ENCODE measurements at regions of chr2 and their contacts with region 1.

Region 1: GRCh38 chr2:181715033-181715630 is 34.8 kb upstream of the NEUROD1 start:
- DNase-seq: peak; percentile 89
- H3K4me3 Mint-ChIP-seq: no peak overlapping the region
- H3K27ac Mint-ChIP-seq: no peak overlapping the region
- H3K4me1 Mint-ChIP-seq: no peaks in the 10 kb centered on the region
- H3K27me3 Mint-ChIP-seq: no peaks in the 10 kb centered on the region

Region 2: GRCh38 chr2:181077128-181077709 is 637.9 kb before region 1 on chr2:
- CTCF ChIA-PET with region 1: interaction called, 11 read pairs
- intact Hi-C with region 1: loop called (anchors 1 kb)
- DNase-seq: peak; percentile 8
- H3K4me3 Mint-ChIP-seq: no peak overlapping the region
- H3K27ac Mint-ChIP-seq: no peak overlapping the region
- H3K4me1 Mint-ChIP-seq: peaks cover 6% of the 10 kb centered on the region
- H3K27me3 Mint-ChIP-seq: no peaks in the 10 kb centered on the region

Region 3: DNA sequence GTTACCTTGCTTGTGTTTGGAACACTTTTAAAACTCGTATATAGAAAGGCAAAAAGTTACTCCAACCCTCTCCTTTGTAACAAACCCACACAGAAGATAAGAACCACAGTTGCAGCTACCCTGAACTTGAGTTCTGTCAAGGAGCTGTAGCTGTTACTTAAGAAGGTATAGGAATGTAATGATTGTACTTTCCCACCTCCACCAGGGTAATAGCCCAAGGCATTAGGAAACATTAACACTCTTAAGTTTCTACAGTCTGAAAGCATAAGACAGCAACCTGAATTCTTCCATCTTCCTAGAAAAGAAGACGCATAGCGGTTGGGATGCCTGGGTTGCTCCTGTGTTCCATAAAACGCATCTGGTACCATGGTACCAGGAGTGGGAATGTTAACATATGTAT is 214.9 kb before region 1 on chr2:
- CTCF ChIA-PET with region 1: interaction called, 11 read pairs
- intact Hi-C with region 1: no loop called
- DNase-seq: no peak
- H3K4me3 Mint-ChIP-seq: no peak overlapping the region
- H3K27ac Mint-ChIP-seq: no peak overlapping the region
- H3K4me1 Mint-ChIP-seq: no peaks in the 10 kb centered on the region
- H3K27me3 Mint-ChIP-seq: no peaks in the 10 kb centered on the region

Region 4: GRCh38 chr2:181586569-181587081 is 128.5 kb before region 1 on chr2:
- CTCF ChIA-PET with region 1: interaction called, 18 read pairs
- intact Hi-C with region 1: no loop called
- DNase-seq: peak; percentile 20
- H3K4me3 Mint-ChIP-seq: no peak overlapping the region
- H3K27ac Mint-ChIP-seq: no peak overlapping the region
- H3K4me1 Mint-ChIP-seq: peaks cover 9% of the 10 kb centered on the region
- H3K27me3 Mint-ChIP-seq: peaks cover 2% of the 10 kb centered on the region

Region 5: GRCh38 chr2:181683518-181684453 is 31.3 kb before region 1 on chr2:
- CTCF ChIA-PET with region 1: interaction called, 13 read pairs
- intact Hi-C with region 1: no loop called
- DNase-seq: peak; percentile 27
- H3K4me3 Mint-ChIP-seq: peak overlapping the region; percentile 68
- H3K27ac Mint-ChIP-seq: no peak overlapping the region
- H3K4me1 Mint-ChIP-seq: peaks cover 47% of the 10 kb centered on the region
- H3K27me3 Mint-ChIP-seq: peaks cover 80% of the 10 kb centered on the region

Measured in activated naive CD4-positive, alpha-beta T cell treated with anti-CD3 and anti-CD28 coated beads for 36 hours (primary cell).